A549 (cell line): ENCODE measurements at regions of chr20 and their contacts with region 1.

Region 1: GRCh38 chr20:63973636-63974402 is 4.1 kb upstream of the ZNF512B start:
- DNase-seq: peak; percentile 86 to 87
- ATAC-seq: peak; percentile 67 to 92
- H3K4me3 ChIP-seq: peak overlapping the region; percentile 46
- H3K27ac ChIP-seq: peak overlapping the region; percentile 80 to 83
- H3K4me1 ChIP-seq: peaks cover 42% of the 10 kb centered on the region
- CTCF ChIP-seq: peak; percentile 97
- EP300 ChIP-seq: no peak
- POLR2A ChIP-seq: peak; percentile 56
- RAD21 ChIP-seq: peak; percentile 93 to 94

Region 2: DNA sequence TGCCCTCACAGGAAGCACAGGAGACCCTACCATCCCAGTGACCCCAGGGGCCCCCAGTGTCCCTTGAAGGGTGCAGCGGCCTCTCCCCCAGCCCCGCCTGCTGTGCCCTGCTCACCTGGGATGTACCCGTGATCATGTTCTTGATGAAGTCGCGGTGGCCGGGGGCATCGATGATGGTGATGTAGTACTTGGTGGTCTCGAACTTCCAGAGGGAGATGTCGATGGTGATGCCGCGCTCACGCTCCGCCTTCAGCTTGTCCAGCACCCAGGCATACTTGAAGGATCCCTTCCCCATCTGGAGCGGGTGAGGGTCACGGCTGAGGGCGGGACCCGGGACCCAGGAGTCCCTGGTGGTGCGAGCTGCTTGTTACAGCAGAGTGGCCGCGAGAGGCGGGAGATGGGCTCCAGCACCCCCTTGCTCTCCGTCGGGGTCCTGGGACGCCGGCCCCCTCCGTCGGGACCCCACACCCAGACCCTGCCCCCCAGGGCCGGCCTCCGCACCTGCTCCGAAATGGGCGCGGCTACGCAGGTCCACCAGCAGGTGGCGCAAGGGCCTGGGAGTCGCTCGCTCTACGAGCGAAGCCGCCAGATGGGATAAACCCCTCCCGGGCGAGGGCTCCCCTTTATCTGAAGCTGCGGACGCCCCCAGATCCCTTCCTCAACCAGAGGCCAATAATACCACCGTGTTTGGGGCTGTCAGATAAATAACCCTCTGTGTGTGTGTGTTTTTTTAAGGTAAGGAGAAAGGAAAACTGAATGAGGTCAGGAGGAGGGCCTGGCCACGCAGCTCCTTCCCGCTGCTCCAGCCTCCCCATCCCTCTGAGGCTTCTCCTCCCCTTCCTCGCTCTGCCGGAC is 477.9 kb before region 1 on chr20:
- CTCF ChIA-PET with region 1: interaction called, 11 read pairs
- POLR2A ChIA-PET with region 1: no interaction called
- DNase-seq: peak; percentile 58 to 73
- ATAC-seq: peak in 1 of 2 experiments; percentile 79; a peak in 3 of 6 replicates
- H3K4me3 ChIP-seq: no peak overlapping the region
- H3K27ac ChIP-seq: peak overlapping the region in 1 of 2 experiments; percentile 55; a peak in 3 of 6 replicates
- H3K4me1 ChIP-seq: peaks cover 27% of the 10 kb centered on the region
- CTCF ChIP-seq: peak; percentile 90
- EP300 ChIP-seq: no peak
- POLR2A ChIP-seq: no peak
- RAD21 ChIP-seq: peak; percentile 52 to 63

Region 3: DNA sequence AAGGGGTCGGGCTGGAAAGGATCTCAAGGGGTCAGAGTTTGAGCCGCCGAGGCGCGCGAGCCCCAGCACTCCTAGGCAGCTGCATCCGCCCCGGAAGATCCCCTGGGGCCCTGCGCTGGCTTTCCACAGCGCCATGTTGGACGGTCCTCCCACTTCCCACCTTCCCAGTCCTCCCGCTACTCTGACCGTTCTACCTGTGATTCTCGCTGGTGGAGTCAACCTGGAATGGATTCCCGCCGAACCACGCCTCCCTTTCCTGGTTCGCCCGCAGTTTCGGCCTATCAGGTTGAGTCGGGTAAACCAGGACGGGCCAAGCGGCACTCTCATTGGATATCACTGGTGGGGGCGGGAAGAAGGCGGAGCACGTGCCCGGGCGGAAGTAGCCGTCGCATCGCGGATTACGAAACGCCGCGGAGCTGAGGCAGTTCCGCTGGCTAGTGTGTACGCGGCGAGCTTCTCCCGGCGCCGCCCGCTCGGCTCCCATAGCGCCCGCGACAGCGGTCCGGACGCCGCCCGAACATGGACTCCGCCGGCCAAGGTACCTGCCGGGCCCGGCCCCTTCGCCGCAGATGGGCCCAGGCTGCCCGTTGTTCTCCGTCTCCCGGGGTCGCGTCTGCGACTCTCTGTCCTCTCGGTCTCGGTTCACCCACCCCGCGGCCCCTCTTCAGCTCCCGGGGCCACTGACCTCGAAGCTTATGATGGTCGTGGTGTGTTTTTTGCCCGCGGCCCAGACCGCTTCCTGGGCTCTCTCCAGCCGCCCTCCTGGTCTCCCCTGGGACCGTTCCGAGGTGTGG is 108.8 kb before region 1 on chr20 and contains the start of gene TPD52L2:
- CTCF ChIA-PET with region 1: interaction called, 11 read pairs
- POLR2A ChIA-PET with region 1: interaction called, 7 read pairs
- DNase-seq: peak; percentile 98 to 99
- ATAC-seq: peak; percentile 90 to 94
- H3K4me3 ChIP-seq: peak within 1 kb of the TSS; percentile 95
- H3K27ac ChIP-seq: peak within 1 kb of the TSS; percentile 94 to 95
- H3K4me1 ChIP-seq: peaks cover 14% of the 10 kb centered on the region; the same call in 2 of the 3 replicates
- CTCF ChIP-seq: no peak
- EP300 ChIP-seq: no peak
- POLR2A ChIP-seq: peak; percentile 68
- RAD21 ChIP-seq: no peak
- polyA plus RNA-seq, gene TPD52L2: 86.3 and 93.9 TPM in 2 replicates

Region 4: DNA sequence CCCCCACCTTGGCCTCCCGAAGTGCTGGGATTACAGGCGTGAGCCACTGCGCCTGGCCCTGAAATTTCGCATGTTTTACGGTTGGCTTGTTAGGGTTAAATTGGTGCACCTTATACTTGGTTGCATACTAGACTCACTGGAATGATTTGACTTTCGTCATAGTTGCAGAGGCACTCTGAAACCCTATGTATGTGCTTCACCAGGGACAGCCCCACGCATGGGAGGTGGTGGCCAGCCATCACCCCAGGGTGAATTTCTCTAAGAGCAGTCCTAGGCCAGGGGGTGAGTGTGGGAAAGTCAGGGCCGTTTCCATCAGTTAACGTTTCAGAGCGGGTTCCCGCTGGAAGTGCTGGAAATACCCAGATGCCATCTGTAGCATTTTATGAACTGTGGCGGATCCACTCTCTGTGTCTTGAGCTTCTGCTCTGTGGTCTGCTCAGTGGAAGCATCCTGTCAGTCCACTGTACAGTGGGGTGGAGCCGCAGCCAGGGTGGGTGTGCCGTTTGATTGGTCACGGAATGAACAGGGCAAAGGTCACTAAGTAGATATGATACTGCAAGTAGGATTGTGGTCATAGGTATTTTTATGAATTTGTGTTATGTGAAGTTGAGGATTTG is 65.7 kb before region 1 on chr20:
- CTCF ChIA-PET with region 1: interaction called, 18 read pairs
- POLR2A ChIA-PET with region 1: no interaction called
- DNase-seq: no peak
- ATAC-seq: peak in 1 of 2 experiments; percentile 29; a peak in 1 of 6 replicates
- H3K4me3 ChIP-seq: no peak overlapping the region
- H3K27ac ChIP-seq: no peak overlapping the region
- H3K4me1 ChIP-seq: peaks cover 5% of the 10 kb centered on the region; the same call in 1 of the 3 replicates
- CTCF ChIP-seq: no peak
- EP300 ChIP-seq: no peak
- POLR2A ChIP-seq: no peak
- RAD21 ChIP-seq: no peak

Region 5: GRCh38 chr20:63955827-63956663 is 17.8 kb before region 1 on chr20 and contains the start of gene UCKL1:
- CTCF ChIA-PET with region 1: interaction called, 44 read pairs
- POLR2A ChIA-PET with region 1: interaction called, 6 read pairs
- DNase-seq: peak; percentile 81 to 90
- ATAC-seq: peak; percentile 73 to 88
- H3K4me3 ChIP-seq: peak within 1 kb of the TSS; percentile 84
- H3K27ac ChIP-seq: peak within 1 kb of the TSS; percentile 96 to 98
- H3K4me1 ChIP-seq: peaks cover 33% of the 10 kb centered on the region
- CTCF ChIP-seq: no peak
- EP300 ChIP-seq: no peak
- POLR2A ChIP-seq: peak; percentile 82
- RAD21 ChIP-seq: no peak
- polyA plus RNA-seq, gene UCKL1: 19.1 and 21.6 TPM in 2 replicates

Region 6: DNA sequence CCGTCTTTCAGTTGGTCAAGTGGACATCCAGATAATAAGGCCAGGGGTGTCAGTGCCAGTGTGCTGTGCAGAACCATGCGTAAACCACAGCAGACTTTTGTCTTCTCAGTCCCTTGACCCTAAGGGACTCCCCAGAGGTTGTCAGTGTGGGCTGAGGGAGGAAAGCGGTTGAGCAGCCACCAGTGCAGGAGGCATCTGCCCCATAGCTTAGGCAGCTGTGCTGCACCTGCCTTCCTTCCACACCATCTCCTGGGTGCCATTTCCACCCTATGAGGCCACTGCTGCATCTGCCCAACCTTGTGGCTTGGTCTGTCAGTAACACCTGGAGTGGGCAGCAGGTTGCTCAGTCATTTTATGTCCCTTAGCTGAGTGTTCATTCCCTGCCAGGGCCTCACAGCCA is 33.1 kb after region 1 on chr20:
- CTCF ChIA-PET with region 1: interaction called, 11 read pairs
- POLR2A ChIA-PET with region 1: no interaction called
- DNase-seq: no peak
- ATAC-seq: no peak
- H3K4me3 ChIP-seq: no peak overlapping the region
- H3K27ac ChIP-seq: no peak overlapping the region
- H3K4me1 ChIP-seq: no peaks in the 10 kb centered on the region
- CTCF ChIP-seq: no peak
- EP300 ChIP-seq: no peak
- POLR2A ChIP-seq: no peak
- RAD21 ChIP-seq: no peak

Region 7: DNA sequence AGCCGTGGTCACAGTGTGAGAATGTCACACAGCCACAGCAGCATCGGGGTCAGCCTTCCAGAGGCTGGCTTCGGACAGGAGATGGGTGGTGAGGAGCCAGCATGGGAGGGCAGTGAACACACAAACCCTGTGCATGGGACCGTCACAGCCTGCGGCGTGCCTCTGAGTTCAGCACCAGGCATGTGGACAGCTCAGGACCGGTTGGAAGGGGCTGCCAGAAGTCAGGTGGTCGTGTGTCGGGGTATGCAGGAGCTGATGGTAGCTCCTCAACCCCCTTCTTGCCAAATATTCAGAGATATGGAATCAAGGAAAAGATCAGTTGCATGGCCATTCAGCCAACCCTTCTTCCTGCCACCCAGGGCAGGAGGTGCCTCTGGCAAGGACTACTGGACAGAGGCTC is 218.6 kb after region 1 on chr20:
- CTCF ChIA-PET with region 1: no interaction called
- POLR2A ChIA-PET with region 1: no interaction called
- DNase-seq: no peak
- ATAC-seq: no peak
- H3K4me3 ChIP-seq: no peak overlapping the region
- H3K27ac ChIP-seq: no peak overlapping the region
- H3K4me1 ChIP-seq: peaks cover 16% of the 10 kb centered on the region; the same call in 2 of the 3 replicates
- CTCF ChIP-seq: no peak
- EP300 ChIP-seq: no peak
- POLR2A ChIP-seq: no peak
- RAD21 ChIP-seq: no peak

Region 8: DNA sequence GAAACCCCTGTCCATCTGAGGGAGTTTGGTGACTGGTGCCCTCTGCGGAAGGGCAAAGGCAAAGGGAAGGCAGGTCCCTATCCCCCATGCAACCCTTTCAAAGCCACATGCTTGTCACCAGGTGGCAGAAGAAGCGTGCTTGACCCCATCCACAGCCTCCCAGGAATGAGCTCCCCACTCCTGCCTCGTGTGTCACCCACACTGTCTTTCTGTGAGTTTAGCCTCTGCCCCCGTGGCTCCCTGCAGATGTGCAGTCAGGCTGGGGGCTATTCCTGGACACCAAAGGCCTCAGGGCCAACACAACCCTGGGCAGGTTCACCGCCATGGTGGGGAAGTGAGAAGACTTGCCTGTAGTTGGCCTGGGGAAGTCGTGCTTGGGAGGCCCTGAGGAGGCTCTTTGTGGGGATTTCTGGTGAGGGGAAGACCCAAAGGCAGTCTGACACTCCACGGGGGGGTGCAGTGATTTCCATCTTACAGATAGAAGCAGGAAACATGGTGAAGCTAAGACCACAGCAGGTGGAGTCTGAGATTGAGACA is 265.1 kb after region 1 on chr20:
- CTCF ChIA-PET with region 1: no interaction called
- POLR2A ChIA-PET with region 1: no interaction called
- DNase-seq: no peak
- ATAC-seq: peak in 1 of 2 experiments; percentile 31; a peak in 2 of 6 replicates
- H3K4me3 ChIP-seq: no peak overlapping the region
- H3K27ac ChIP-seq: no peak overlapping the region
- H3K4me1 ChIP-seq: no peaks in the 10 kb centered on the region
- CTCF ChIP-seq: no peak
- EP300 ChIP-seq: no peak
- POLR2A ChIP-seq: no peak
- RAD21 ChIP-seq: no peak